IMR-90 (cell line): ENCODE measurements at regions of chr17 and their contacts with region 1.

Region 1: DNA sequence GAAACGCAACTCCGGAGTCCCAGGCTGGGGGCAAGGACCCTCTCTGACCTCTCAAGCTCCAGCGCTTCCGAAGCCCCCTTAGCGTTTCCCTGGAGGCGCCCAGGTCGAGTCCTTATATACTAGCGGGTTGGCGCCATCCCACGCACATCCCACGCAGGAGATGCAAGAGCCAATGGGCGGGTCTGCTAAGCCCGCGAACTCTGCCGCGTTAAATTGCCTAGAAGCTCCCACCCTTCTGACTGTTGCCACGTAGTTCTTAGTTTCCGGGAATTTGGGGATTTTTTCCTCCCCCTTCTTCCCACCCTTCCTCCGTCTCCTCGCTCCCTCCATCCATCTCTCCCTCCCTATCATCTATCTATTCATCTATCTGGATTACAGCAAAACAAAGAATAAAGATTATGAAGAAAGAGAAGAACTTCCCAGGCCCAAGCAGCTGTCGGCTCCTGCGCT is at the start of gene SLFN11:
- DNase-seq: peak; percentile 97
- ATAC-seq: peak; percentile 88
- H3K4me3 ChIP-seq: peak within 1 kb of the TSS; percentile 82
- H3K27ac ChIP-seq: peak within 1 kb of the TSS; percentile 91
- H3K4me1 ChIP-seq: no peaks in the 10 kb centered on the region
- H3K27me3 ChIP-seq: no peaks in the 10 kb centered on the region
- CTCF ChIP-seq: no peak
- POLR2A ChIP-seq: peak; percentile 99
- RAD21 ChIP-seq: no peak
- total RNA-seq, gene SLFN11: 114 and 144 TPM in 2 replicates

Region 2: GRCh38 chr17:34261568-34262337 is 1111.8 kb before region 1 on chr17:
- CTCF ChIA-PET with region 1: no interaction called
- POLR2A ChIA-PET with region 1: no interaction called
- dilution Hi-C with region 1: no loop called
- in situ Hi-C with region 1: no loop called
- intact Hi-C with region 1: loop called (anchors 5 kb)
- DNase-seq: no peak
- ATAC-seq: no peak
- H3K4me3 ChIP-seq: no peak overlapping the region
- H3K27ac ChIP-seq: no peak overlapping the region
- H3K4me1 ChIP-seq: 0 out of 2 replicates have a peak, but pooled peaks cover 1% of the 10 kb centered on the region
- H3K27me3 ChIP-seq: no peaks in the 10 kb centered on the region
- CTCF ChIP-seq: no peak
- POLR2A ChIP-seq: no peak
- RAD21 ChIP-seq: no peak

Region 3: DNA sequence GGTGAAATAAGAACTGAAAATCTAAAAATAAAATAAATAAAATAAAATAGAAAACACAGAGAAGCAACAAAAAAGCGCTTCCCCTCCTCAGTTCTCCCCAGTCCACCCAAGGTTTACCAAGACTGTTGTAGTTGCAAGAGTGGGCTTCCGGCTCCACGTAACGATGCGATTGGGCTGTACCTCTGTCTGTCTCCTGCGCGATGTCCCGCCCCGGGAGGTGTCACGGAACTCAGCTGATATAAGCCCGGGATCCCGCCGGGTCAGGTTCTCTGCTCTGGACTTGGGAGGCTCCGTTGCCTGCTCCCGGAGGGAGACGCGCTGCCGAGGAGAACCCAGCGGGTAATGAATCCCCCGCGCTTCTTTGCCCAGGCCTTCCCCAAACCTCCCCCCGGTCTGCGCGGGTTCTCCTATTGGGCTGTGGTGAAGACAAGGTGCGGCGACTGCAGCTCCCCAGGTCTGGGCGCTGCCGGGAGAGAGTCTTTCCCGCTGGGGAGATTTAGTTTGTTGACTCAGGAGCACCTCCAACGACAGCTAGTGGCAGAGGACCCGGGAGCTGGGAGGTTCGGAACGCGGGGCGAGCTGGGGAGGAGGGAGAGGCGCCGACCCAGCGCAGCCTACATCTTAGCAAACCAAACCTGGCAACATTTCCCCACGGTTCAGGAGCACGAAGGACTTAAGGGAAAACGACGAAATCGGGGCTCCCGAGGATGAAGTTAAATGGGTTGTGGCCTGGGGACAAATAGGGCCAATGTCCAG is 130.6 kb before region 1 on chr17 and contains the start of gene SLFN5:
- CTCF ChIA-PET with region 1: no interaction called
- POLR2A ChIA-PET with region 1: no interaction called
- dilution Hi-C with region 1: no loop called
- in situ Hi-C with region 1: no loop called
- intact Hi-C with region 1: loop called (anchors 5 kb)
- DNase-seq: peak; percentile 90
- ATAC-seq: peak; percentile 79
- H3K4me3 ChIP-seq: peak within 1 kb of the TSS; percentile 59
- H3K27ac ChIP-seq: peak within 1 kb of the TSS; percentile 85
- H3K4me1 ChIP-seq: peaks cover 5% of the 10 kb centered on the region
- H3K27me3 ChIP-seq: no peaks in the 10 kb centered on the region
- CTCF ChIP-seq: no peak
- POLR2A ChIP-seq: peak; percentile 99
- RAD21 ChIP-seq: 0 out of 2 replicates have a peak, but pooled peaks have one; percentile 5
- total RNA-seq, gene SLFN5: 48.9 and 64.2 TPM in 2 replicates

Region 4: GRCh38 chr17:35432176-35433074 is 58.9 kb after region 1 on chr17 and contains the start of gene SLFN12:
- CTCF ChIA-PET with region 1: no interaction called
- POLR2A ChIA-PET with region 1: no interaction called
- dilution Hi-C with region 1: no loop called
- in situ Hi-C with region 1: no loop called
- intact Hi-C with region 1: loop called (anchors 1 kb)
- DNase-seq: peak; percentile 98
- ATAC-seq: peak; percentile 78
- H3K4me3 ChIP-seq: peak within 1 kb of the TSS; percentile 59
- H3K27ac ChIP-seq: peak within 1 kb of the TSS; percentile 92
- H3K4me1 ChIP-seq: peaks cover 1% of the 10 kb centered on the region; the same call in 1 of the 2 replicates
- H3K27me3 ChIP-seq: no peaks in the 10 kb centered on the region
- CTCF ChIP-seq: no peak
- POLR2A ChIP-seq: peak; percentile 83; the same call in 1 of the 2 replicates
- RAD21 ChIP-seq: no peak
- total RNA-seq, gene SLFN12: 38.9 and 48.6 TPM in 2 replicates

Region 5: DNA sequence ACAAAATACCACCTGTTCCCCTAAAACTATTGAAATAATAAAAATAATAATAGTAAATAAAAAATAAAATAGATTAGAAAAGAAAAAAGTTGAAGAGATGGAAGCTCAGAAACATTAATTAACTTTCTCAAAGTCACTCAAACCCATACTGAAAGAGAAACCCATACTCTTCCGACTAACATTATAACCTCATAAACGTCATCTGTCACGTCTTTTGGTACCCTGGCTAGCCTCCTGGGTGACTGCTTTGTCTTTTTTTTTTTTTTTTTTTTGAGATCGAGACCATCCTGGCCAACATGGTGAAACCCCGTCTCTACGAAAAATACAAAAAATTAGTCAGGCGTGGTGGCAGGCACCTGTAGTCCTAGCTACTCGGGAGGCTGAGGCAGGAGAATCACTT is 156.3 kb after region 1 on chr17:
- CTCF ChIA-PET with region 1: interaction called, 8 read pairs
- POLR2A ChIA-PET with region 1: no interaction called
- dilution Hi-C with region 1: no loop called
- in situ Hi-C with region 1: no loop called
- intact Hi-C with region 1: loop called (anchors 5 kb)
- DNase-seq: no peak
- ATAC-seq: no peak
- H3K4me3 ChIP-seq: no peak overlapping the region
- H3K27ac ChIP-seq: no peak overlapping the region
- H3K4me1 ChIP-seq: no peaks in the 10 kb centered on the region
- H3K27me3 ChIP-seq: no peaks in the 10 kb centered on the region; the same call in 1 of the 2 replicates
- CTCF ChIP-seq: no peak
- POLR2A ChIP-seq: no peak
- RAD21 ChIP-seq: no peak